ENCODE measurements at regions of chr1 and their contacts with region 1.

Region 1: GRCh38 chr1:201895913-201896807 is 7.5 kb downstream of the SHISA4 start:
- DNase-seq: peak; percentile 61 to 89 (median 74)
- ATAC-seq: peak; percentile 91
- H3K4me3 ChIP-seq: no peak overlapping the region
- H3K4me3 Mint-ChIP-seq: peak overlapping the region; percentile 46
- H3K27ac ChIP-seq: no peak overlapping the region
- H3K27ac Mint-ChIP-seq: no peak overlapping the region
- H3K4me1 ChIP-seq: peaks cover 9% of the 10 kb centered on the region
- H3K4me1 Mint-ChIP-seq: peaks cover 7% of the 10 kb centered on the region
- H3K27me3 ChIP-seq: peaks cover 4 to 14% of the 10 kb centered on the region in 2 experiments
- H3K27me3 Mint-ChIP-seq: peaks cover 47% of the 10 kb centered on the region
- CTCF ChIP-seq: peak; percentile 77

Region 2: DNA sequence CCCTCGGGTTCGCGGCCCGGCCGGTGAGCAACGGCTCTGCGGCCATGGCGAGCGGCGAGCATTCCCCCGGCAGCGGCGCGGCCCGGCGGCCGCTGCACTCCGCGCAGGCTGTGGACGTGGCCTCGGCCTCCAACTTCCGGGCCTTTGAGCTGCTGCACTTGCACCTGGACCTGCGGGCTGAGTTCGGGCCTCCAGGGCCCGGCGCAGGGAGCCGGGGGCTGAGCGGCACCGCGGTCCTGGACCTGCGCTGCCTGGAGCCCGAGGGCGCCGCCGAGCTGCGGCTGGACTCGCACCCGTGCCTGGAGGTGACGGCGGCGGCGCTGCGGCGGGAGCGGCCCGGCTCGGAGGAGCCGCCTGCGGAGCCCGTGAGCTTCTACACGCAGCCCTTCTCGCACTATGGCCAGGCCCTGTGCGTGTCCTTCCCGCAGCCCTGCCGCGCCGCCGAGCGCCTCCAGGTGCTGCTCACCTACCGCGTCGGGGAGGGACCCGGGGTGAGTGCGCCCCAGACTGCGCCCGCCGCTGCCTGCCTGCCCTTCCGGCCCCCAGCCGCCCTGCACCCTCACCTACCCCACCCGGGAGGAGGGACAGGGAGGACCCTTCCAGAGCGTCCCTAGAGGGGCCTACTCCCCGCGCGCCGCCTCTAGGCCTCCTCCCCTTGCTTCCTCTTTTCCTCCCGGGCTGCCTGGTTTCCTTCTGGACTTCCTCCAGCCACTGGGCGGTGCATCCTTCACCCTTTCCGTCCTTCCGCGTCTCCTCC is 86.6 kb after region 1 on chr1 and contains the start of gene RNPEP:
- CTCF ChIA-PET with region 1: interaction called, 10 read pairs
- POLR2A ChIA-PET with region 1: interaction called, 4 read pairs
- intact Hi-C with region 1: no loop called
- DNase-seq: peak; percentile 21 to 78 (median 51)
- ATAC-seq: peak; percentile 86
- H3K4me3 ChIP-seq: peak within 1 kb of the TSS; percentile 57
- H3K4me3 Mint-ChIP-seq: peak within 1 kb of the TSS; percentile 97
- H3K27ac ChIP-seq: no peak within 1 kb of the TSS
- H3K27ac Mint-ChIP-seq: peak within 1 kb of the TSS; percentile 87
- H3K4me1 ChIP-seq: peaks cover 17% of the 10 kb centered on the region
- H3K4me1 Mint-ChIP-seq: peaks cover 26% of the 10 kb centered on the region
- H3K27me3 ChIP-seq: no peaks in the 10 kb centered on the region
- H3K27me3 Mint-ChIP-seq: no peaks in the 10 kb centered on the region
- CTCF ChIP-seq: no peak
- total RNA-seq, gene RNPEP: 19.9 to 20.8 TPM

Region 3: DNA sequence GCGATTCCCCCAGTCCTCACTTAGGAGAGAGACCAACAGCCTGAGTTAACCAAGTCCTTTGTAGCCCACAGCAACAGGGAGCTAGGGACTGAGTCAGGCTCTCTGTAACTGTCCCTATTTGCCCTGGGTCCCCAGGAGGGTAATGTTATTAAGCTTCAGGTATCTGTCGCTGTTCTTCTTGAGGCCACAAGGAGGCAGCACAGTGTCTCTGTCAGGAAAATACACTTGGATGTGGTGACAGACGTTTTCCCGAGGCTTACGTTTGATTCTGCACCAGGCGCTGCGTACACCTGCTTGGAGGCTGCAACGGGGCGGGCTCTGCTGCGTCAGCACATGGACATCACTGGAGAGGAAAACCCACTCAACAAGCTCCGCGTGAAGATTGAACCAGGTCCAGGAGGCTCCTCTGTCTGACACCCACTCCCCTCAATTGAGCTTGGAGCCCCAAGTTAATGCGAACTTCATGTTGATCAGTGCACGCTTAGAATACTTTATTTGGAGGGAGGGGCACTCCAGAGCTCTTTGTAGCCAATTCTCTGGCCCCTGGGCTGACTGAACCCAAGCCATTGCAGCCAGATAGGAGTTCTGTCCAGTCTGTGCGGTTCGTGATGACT is 103.6 kb after region 1 on chr1:
- CTCF ChIA-PET with region 1: interaction called, 11 read pairs
- POLR2A ChIA-PET with region 1: no interaction called
- intact Hi-C with region 1: no loop called
- DNase-seq: peak in 4 of 14 experiments; percentile 27 to 63 (median 48)
- ATAC-seq: peak; percentile 71
- H3K4me3 ChIP-seq: no peak overlapping the region
- H3K4me3 Mint-ChIP-seq: no peak overlapping the region
- H3K27ac ChIP-seq: no peak overlapping the region
- H3K27ac Mint-ChIP-seq: no peak overlapping the region
- H3K4me1 ChIP-seq: no peaks in the 10 kb centered on the region
- H3K4me1 Mint-ChIP-seq: no peaks in the 10 kb centered on the region
- H3K27me3 ChIP-seq: no peaks in the 10 kb centered on the region
- H3K27me3 Mint-ChIP-seq: no peaks in the 10 kb centered on the region
- CTCF ChIP-seq: peak; percentile 73

Region 4: GRCh38 chr1:202135221-202135721 is 239.1 kb after region 1 on chr1:
- CTCF ChIA-PET with region 1: interaction called, 6 read pairs
- POLR2A ChIA-PET with region 1: no interaction called
- intact Hi-C with region 1: loop called (anchors 2 to 5 kb)
- DNase-seq: peak in 12 of 14 experiments; percentile 28 to 79 (median 42)
- ATAC-seq: peak; percentile 95
- H3K4me3 ChIP-seq: no peak overlapping the region
- H3K4me3 Mint-ChIP-seq: no peak overlapping the region
- H3K27ac ChIP-seq: no peak overlapping the region
- H3K27ac Mint-ChIP-seq: peak overlapping the region; percentile 1
- H3K4me1 ChIP-seq: peaks cover 15% of the 10 kb centered on the region
- H3K4me1 Mint-ChIP-seq: peaks cover 18% of the 10 kb centered on the region
- H3K27me3 ChIP-seq: no peaks in the 10 kb centered on the region
- H3K27me3 Mint-ChIP-seq: no peaks in the 10 kb centered on the region
- CTCF ChIP-seq: peak; percentile 80

Region 5: DNA sequence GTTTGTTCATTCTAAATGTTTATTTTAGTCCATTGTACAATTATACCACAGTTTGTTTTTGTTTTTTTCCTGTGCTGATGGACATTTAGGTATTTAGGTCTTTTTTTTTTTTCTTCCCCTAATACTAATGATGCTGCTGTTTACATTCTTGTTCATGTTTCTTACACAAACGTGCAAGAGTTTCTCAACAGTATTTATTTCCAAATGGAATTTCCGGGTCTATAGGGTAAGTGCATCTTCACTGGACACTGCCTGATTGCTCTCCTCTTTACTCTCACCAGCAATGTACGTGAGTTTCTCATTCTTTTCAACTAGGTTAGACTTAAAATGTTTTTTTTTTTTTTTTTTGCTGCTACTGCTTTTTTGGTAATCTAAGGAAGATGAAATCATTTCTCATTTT is 575.1 kb after region 1 on chr1:
- CTCF ChIA-PET with region 1: no interaction called
- POLR2A ChIA-PET with region 1: no interaction called
- intact Hi-C with region 1: no loop called
- DNase-seq: no peak
- ATAC-seq: no peak
- H3K4me3 ChIP-seq: no peak overlapping the region
- H3K4me3 Mint-ChIP-seq: no peak overlapping the region
- H3K27ac ChIP-seq: no peak overlapping the region
- H3K27ac Mint-ChIP-seq: no peak overlapping the region
- H3K4me1 ChIP-seq: no peaks in the 10 kb centered on the region
- H3K4me1 Mint-ChIP-seq: no peaks in the 10 kb centered on the region
- H3K27me3 ChIP-seq: no peaks in the 10 kb centered on the region
- H3K27me3 Mint-ChIP-seq: no peaks in the 10 kb centered on the region
- CTCF ChIP-seq: no peak